Adrenal gland (tissue), 19 donors: ENCODE measurements at regions of chr3 and their contacts with region 1.

Region 1: DNA sequence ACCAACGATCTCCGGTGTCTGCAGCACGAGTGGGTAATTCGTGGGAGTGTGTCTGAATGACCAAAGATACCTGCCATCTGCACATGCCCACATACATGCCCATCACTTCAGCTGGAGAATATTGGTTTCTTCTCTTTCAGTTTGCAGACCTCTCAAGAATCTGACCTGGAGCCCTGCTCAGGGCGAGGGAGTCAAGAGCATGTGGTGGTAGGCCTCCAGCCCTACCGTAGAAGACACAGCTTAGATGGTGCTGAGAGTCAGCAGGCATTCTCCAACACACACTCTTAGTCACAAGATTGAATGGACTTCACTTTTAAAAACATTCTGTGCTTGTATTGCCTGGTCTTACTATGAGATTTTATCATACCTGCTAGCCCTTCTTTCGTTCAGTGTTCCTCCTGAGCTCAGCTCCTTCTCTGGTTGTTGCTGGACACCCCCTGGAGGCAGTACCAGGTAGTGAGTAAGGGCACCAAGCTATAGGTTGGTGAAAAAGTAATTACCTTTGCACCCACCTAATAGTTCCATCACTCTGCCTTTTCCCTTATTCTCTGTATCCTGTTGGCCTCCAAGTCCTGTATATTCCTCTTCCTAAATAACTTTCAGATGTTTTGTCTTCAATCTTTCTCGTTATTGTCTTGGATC is 252.0 kb downstream of the CACNA2D3 start:
- DNase-seq: peak in 4 of 7 donors; percentile 17 to 40 (median 28)
- H3K4me3 ChIP-seq: no peak overlapping the region
- H3K27ac ChIP-seq: no peak overlapping the region
- H3K4me1 ChIP-seq: no peaks in the 10 kb centered on the region
- H3K27me3 ChIP-seq: no peaks in the 10 kb centered on the region
- CTCF ChIP-seq: peak; percentile 18 to 58 (median 48)
- POLR2A ChIP-seq: no peak

Region 2: GRCh38 chr3:53938645-53939044 is 435.7 kb before region 1 on chr3:
- intact Hi-C with region 1: loop called in 1 of 2 experiments (anchors 10 kb)
- DNase-seq: peak; percentile 27 to 68 (median 36)
- H3K4me3 ChIP-seq: no peak overlapping the region
- H3K27ac ChIP-seq: no peak overlapping the region
- H3K4me1 ChIP-seq: no peaks in the 10 kb centered on the region
- H3K27me3 ChIP-seq: peaks cover 7% of the 10 kb centered on the region
- CTCF ChIP-seq: peak; percentile 60 to 81 (median 76)
- POLR2A ChIP-seq: no peak

Region 3: GRCh38 chr3:54146506-54147239 is 227.7 kb before region 1 on chr3:
- intact Hi-C with region 1: loop called in 1 of 2 experiments (anchors 5 kb)
- DNase-seq: peak; percentile 34 to 79 (median 58)
- H3K4me3 ChIP-seq: no peak overlapping the region
- H3K27ac ChIP-seq: no peak overlapping the region
- H3K4me1 ChIP-seq: peaks cover 0 to 5% of the 10 kb centered on the region in 2 donors
- H3K27me3 ChIP-seq: no peaks in the 10 kb centered on the region
- CTCF ChIP-seq: peak; percentile 21 to 57 (median 54)
- POLR2A ChIP-seq: no peak